SK-N-SH (cell line): ENCODE measurements at regions of chr4 and their contacts with region 1.

Region 1: GRCh38 chr4:41692717-41693345 is 55.7 kb downstream of the PHOX2B start:
- DNase-seq: peak; percentile 45
- H3K4me3 ChIP-seq: peak overlapping the region in 1 of 2 experiments; percentile 22; a peak in 1 of 4 replicates
- H3K27ac ChIP-seq: peak overlapping the region in 1 of 2 experiments; percentile 83; a peak in 2 of 4 replicates
- H3K4me1 ChIP-seq: peaks cover 0 to 10% of the 10 kb centered on the region in 2 experiments; a peak in 2 of 4 replicates
- H3K27me3 ChIP-seq: 0 out of 2 replicates have a peak, but pooled peaks cover 4% of the 10 kb centered on the region
- CTCF ChIP-seq: peak; percentile 92
- EP300 ChIP-seq: no peak
- RAD21 ChIP-seq: peak; percentile 98

Region 2: GRCh38 chr4:41281038-41281634 is 411.7 kb before region 1 on chr4:
- CTCF ChIA-PET with region 1: interaction called, 28 read pairs
- POLR2A ChIA-PET with region 1: no interaction called
- DNase-seq: peak; percentile 84
- H3K4me3 ChIP-seq: no peak overlapping the region
- H3K27ac ChIP-seq: no peak overlapping the region
- H3K4me1 ChIP-seq: no peaks in the 10 kb centered on the region; a peak in 1 of 4 replicates
- H3K27me3 ChIP-seq: no peaks in the 10 kb centered on the region
- CTCF ChIP-seq: peak; percentile 90
- EP300 ChIP-seq: no peak
- RAD21 ChIP-seq: peak; percentile 100

Region 3: GRCh38 chr4:41741354-41741753 is 48.5 kb after region 1 on chr4:
- CTCF ChIA-PET with region 1: interaction called, 19 read pairs
- POLR2A ChIA-PET with region 1: no interaction called
- DNase-seq: no peak
- H3K4me3 ChIP-seq: no peak overlapping the region
- H3K27ac ChIP-seq: no peak overlapping the region; a peak in 2 of 4 replicates
- H3K4me1 ChIP-seq: peaks cover 0 to 16% of the 10 kb centered on the region in 2 experiments; a peak in 2 of 4 replicates
- H3K27me3 ChIP-seq: peaks cover 23% of the 10 kb centered on the region
- CTCF ChIP-seq: no peak
- EP300 ChIP-seq: no peak
- RAD21 ChIP-seq: no peak

Region 4: DNA sequence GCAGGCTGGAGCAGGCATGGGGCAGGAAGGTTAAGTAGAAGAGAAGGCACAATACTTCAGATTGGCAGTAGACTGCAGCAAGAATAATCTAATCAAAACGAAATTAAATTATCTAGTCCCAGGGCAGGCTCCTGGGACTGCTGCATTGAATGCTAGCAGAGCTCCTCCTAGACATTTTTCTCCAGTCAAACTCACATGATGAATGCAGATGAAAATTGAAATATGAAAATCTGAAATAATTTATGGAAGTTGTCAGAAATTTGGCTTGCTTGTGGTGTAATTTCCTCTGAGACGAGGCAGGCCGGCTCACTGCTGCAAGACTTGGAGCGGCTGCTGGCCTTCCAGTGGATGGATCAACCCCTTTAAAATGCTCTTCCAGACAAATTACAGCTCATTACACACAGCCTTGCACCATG is 164.4 kb after region 1 on chr4:
- CTCF ChIA-PET with region 1: interaction called, 20 read pairs
- POLR2A ChIA-PET with region 1: no interaction called
- DNase-seq: peak; percentile 69
- H3K4me3 ChIP-seq: no peak overlapping the region
- H3K27ac ChIP-seq: peak overlapping the region in 1 of 2 experiments; percentile 100; a peak in 2 of 4 replicates
- H3K4me1 ChIP-seq: peaks cover 0 to 27% of the 10 kb centered on the region in 2 experiments; a peak in 2 of 4 replicates
- H3K27me3 ChIP-seq: peaks cover 14% of the 10 kb centered on the region; the same call in 1 of the 2 replicates
- CTCF ChIP-seq: no peak
- EP300 ChIP-seq: peak; percentile 4 to 98; a peak in 3 of 4 replicates
- RAD21 ChIP-seq: peak; percentile 32

Region 5: GRCh38 chr4:41882625-41883347 is 190.0 kb after region 1 on chr4:
- CTCF ChIA-PET with region 1: interaction called, 188 read pairs
- POLR2A ChIA-PET with region 1: interaction called, 6 read pairs
- DNase-seq: peak; percentile 90
- H3K4me3 ChIP-seq: peak overlapping the region; percentile 58
- H3K27ac ChIP-seq: peak overlapping the region in 1 of 2 experiments; percentile 99; a peak in 2 of 4 replicates
- H3K4me1 ChIP-seq: peaks cover 0 to 47% of the 10 kb centered on the region in 2 experiments; a peak in 3 of 4 replicates
- H3K27me3 ChIP-seq: peaks cover 52% of the 10 kb centered on the region
- CTCF ChIP-seq: peak; percentile 95
- EP300 ChIP-seq: peak in 1 of 2 experiments; percentile 38; a peak in 2 of 4 replicates
- RAD21 ChIP-seq: peak; percentile 75

Region 6: GRCh38 chr4:41934815-41935651 is 242.2 kb after region 1 on chr4 and contains the start of gene TMEM33:
- CTCF ChIA-PET with region 1: interaction called, 25 read pairs
- POLR2A ChIA-PET with region 1: interaction called, 3 read pairs
- DNase-seq: peak; percentile 88
- H3K4me3 ChIP-seq: peak within 1 kb of the TSS; percentile 78 to 99
- H3K27ac ChIP-seq: peak within 1 kb of the TSS; percentile 75 to 90
- H3K4me1 ChIP-seq: peaks cover 8 to 21% of the 10 kb centered on the region in 2 experiments; a peak in 3 of 4 replicates
- H3K27me3 ChIP-seq: no peaks in the 10 kb centered on the region
- CTCF ChIP-seq: peak; percentile 21
- EP300 ChIP-seq: no peak
- RAD21 ChIP-seq: no peak
- polyA plus RNA-seq, gene TMEM33: 31.2 and 43.2 TPM in 2 replicates

Region 7: DNA sequence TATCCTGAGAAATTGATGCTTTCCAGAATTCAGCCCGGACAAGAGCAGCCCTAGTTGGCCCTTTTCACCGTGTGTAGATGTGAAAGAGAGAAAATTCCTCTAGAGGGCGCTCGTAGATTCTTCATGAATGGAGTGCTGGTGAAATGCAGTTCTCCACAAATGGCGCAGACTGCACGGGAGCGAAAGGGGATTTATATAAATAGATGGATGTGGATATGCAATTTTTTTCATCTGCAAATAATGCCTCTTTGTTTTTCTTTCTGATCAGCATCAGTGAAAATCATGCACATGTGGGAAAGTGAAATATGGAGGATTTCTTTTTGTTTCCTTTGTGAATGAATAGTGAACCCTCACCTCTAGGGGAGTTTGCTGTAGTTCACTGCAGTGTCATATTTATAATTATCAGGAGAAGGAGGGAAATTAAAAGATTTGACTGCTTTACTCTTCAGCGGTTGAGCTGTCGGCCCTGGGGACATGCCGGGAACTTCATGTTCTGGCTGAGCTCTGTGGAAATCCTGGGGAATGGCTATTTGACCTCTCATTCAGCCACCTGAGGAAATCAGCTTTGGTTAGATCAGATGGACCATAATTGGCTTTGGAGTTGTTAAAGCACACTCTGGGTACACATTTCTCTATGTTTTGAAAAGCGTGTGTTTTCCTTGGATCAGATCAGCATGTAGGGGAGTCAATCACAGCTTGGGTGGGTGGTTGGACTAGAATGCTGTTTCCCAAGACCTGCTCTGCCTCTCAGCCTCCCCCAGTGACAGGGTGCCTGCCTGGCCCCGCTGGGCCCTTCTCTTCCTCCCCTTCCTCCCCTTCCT is 589.5 kb after region 1 on chr4:
- CTCF ChIA-PET with region 1: interaction called, 11 read pairs
- POLR2A ChIA-PET with region 1: no interaction called
- DNase-seq: peak; percentile 81
- H3K4me3 ChIP-seq: peak overlapping the region in 1 of 2 experiments; percentile 12; a peak in 1 of 4 replicates
- H3K27ac ChIP-seq: peak overlapping the region in 1 of 2 experiments; percentile 36; a peak in 1 of 4 replicates
- H3K4me1 ChIP-seq: peaks cover 0 to 13% of the 10 kb centered on the region in 2 experiments; a peak in 3 of 4 replicates
- H3K27me3 ChIP-seq: no peaks in the 10 kb centered on the region
- CTCF ChIP-seq: peak; percentile 80
- EP300 ChIP-seq: no peak
- RAD21 ChIP-seq: peak; percentile 96